ENCODE measurements at regions of chr3 and their contacts with region 1.

Region 1: DNA sequence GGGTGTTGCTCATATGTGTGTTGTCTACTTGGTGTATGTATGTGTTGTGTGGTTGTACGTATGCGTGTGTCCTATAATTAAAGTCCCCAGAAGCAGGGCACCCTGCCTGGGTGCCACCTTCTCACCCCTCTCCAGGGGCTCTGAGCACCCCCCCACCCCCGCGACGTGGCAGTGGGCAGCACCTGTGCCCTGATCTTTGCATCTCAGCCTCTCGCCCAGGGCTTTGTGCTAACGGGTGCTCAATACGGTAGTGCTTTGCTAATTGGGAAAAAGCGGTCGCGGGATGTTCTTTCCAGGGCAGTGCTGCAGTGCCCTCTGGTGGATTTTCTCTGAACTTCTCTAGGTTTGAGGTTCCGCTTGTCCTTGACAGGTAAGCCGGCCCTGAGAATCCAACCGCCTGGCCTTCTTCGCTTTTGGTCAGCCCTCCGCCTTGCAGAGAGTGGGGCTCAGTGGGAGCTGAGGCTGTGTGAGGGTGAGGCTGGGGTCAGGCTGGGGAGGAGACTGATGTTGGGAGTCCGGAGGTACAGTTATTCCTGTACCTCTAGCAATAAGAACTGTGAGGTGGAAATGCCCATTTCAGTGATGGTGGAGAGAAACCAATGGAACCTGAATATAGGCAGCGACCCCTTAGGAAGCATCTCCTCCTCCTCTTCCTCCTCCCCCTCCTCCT is 17.6 kb upstream of the EPHB3 start:
- DNase-seq: peak; percentile 85
- H3K4me3 Mint-ChIP-seq: no peak overlapping the region
- H3K27ac Mint-ChIP-seq: no peak overlapping the region
- H3K4me1 Mint-ChIP-seq: peaks cover 9% of the 10 kb centered on the region
- H3K27me3 Mint-ChIP-seq: peaks cover 64% of the 10 kb centered on the region

Region 2: GRCh38 chr3:184371570-184372018 is 172.4 kb before region 1 on chr3:
- CTCF ChIA-PET with region 1: interaction called, 143 read pairs
- DNase-seq: peak; percentile 75
- H3K4me3 Mint-ChIP-seq: no peak overlapping the region
- H3K27ac Mint-ChIP-seq: no peak overlapping the region
- H3K4me1 Mint-ChIP-seq: peaks cover 6% of the 10 kb centered on the region
- H3K27me3 Mint-ChIP-seq: peaks cover 33% of the 10 kb centered on the region

Region 3: GRCh38 chr3:184417619-184418327 is 126.2 kb before region 1 on chr3:
- CTCF ChIA-PET with region 1: interaction called, 73 read pairs
- DNase-seq: peak; percentile 79
- H3K4me3 Mint-ChIP-seq: no peak overlapping the region
- H3K27ac Mint-ChIP-seq: no peak overlapping the region
- H3K4me1 Mint-ChIP-seq: no peaks in the 10 kb centered on the region
- H3K27me3 Mint-ChIP-seq: peaks cover 12% of the 10 kb centered on the region

Region 4: GRCh38 chr3:184469423-184469822 is 74.6 kb before region 1 on chr3:
- CTCF ChIA-PET with region 1: interaction called, 27 read pairs
- DNase-seq: peak; percentile 38
- H3K4me3 Mint-ChIP-seq: no peak overlapping the region
- H3K27ac Mint-ChIP-seq: no peak overlapping the region
- H3K4me1 Mint-ChIP-seq: peaks cover 10% of the 10 kb centered on the region
- H3K27me3 Mint-ChIP-seq: peaks cover 61% of the 10 kb centered on the region

Region 5: GRCh38 chr3:184523825-184524615 is 20.0 kb before region 1 on chr3:
- CTCF ChIA-PET with region 1: interaction called, 18 read pairs
- DNase-seq: peak; percentile 38
- H3K4me3 Mint-ChIP-seq: no peak overlapping the region
- H3K27ac Mint-ChIP-seq: peak overlapping the region; percentile 6
- H3K4me1 Mint-ChIP-seq: peaks cover 25% of the 10 kb centered on the region
- H3K27me3 Mint-ChIP-seq: peaks cover 53% of the 10 kb centered on the region

Measured in activated naive CD4-positive, alpha-beta T cell treated with anti-CD3 and anti-CD28 coated beads, Interleukin-2, amount 10 ng/mL, durations not matched to agents 7 days and 5 days (primary cell).